AG04449 (cell line): ENCODE measurements at regions of chr3 and their contacts with region 1.

Region 1: DNA sequence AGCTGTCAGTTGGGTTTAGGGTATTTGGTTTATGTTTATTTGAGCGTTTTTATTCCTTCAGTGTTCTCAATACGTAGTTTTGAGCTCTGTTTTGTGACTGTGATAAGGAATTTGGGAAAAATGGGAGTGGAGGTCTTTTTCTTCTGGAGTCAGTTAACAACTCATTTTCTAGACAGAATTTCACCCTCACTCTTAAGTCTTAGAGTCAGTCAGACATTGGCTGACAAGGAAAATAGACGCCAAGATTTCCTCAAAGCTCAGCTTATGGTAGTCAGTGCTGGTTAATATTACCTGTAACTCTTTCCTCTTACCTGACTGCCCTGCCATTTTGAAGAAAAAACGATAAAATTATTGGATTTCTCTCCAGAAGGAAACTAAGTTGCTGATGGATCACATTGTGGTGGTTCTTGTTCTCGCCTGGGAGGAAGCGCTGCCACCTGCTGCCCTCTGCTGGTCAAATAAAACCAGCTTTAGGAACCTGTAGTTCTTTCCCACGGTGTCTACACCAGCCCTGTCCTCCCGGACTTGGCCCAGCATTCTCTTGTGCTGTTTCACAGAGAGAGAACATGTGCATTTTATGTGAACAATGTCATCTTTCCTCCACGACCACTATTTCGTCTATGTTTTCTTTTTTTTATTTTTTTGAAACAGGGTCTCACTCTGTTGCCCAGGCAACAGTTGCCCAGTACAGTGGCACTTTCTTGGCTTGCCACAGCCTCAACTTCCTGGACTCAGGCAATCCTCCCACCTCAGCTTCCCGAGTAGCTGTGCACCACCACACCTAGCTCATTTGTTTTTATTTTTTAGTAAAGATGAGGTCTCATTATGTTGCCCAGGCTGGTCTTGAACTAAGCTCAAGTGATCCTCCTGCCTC is 41.4 kb upstream of the UMPS start:
- DNase-seq: no peak
- H3K4me3 ChIP-seq: no peak overlapping the region
- CTCF ChIP-seq: peak; percentile 76

Region 2: GRCh38 chr3:124664804-124665203 is 24.0 kb before region 1 on chr3:
- CTCF ChIA-PET with region 1: interaction called, 18 read pairs
- POLR2A ChIA-PET with region 1: no interaction called
- DNase-seq: no peak
- H3K4me3 ChIP-seq: no peak overlapping the region
- CTCF ChIP-seq: no peak

Region 3: GRCh38 chr3:124671106-124671505 is 17.7 kb before region 1 on chr3:
- CTCF ChIA-PET with region 1: interaction called, 60 read pairs
- POLR2A ChIA-PET with region 1: no interaction called
- DNase-seq: no peak
- H3K4me3 ChIP-seq: no peak overlapping the region
- CTCF ChIP-seq: no peak

Region 4: DNA sequence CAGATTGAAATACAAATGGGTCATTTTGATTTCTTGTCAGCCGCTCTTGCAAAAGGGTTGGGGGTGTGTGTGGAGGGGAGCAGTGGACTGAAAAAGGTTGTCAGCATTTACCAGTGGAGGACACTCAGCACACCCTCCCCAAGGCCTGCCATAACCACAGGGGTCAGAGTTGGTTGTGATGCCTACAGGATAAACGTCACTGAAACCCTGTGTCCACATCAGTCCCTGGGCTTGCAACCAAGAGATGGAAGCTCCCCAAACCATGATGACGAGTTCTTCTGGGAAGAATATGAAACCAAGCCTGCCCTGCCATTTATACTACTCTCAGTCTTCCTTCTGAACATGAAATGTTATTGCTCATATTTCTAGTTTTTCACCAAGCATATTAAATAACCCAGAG is 12.6 kb before region 1 on chr3:
- CTCF ChIA-PET with region 1: interaction called, 60 read pairs
- POLR2A ChIA-PET with region 1: no interaction called
- DNase-seq: no peak
- H3K4me3 ChIP-seq: no peak overlapping the region
- CTCF ChIP-seq: no peak

Region 5: GRCh38 chr3:124700880-124701684 is 12.3 kb after region 1 on chr3:
- CTCF ChIA-PET with region 1: interaction called, 122 read pairs
- POLR2A ChIA-PET with region 1: interaction called, 3 read pairs
- DNase-seq: no peak
- H3K4me3 ChIP-seq: no peak overlapping the region
- CTCF ChIP-seq: no peak

Region 6: DNA sequence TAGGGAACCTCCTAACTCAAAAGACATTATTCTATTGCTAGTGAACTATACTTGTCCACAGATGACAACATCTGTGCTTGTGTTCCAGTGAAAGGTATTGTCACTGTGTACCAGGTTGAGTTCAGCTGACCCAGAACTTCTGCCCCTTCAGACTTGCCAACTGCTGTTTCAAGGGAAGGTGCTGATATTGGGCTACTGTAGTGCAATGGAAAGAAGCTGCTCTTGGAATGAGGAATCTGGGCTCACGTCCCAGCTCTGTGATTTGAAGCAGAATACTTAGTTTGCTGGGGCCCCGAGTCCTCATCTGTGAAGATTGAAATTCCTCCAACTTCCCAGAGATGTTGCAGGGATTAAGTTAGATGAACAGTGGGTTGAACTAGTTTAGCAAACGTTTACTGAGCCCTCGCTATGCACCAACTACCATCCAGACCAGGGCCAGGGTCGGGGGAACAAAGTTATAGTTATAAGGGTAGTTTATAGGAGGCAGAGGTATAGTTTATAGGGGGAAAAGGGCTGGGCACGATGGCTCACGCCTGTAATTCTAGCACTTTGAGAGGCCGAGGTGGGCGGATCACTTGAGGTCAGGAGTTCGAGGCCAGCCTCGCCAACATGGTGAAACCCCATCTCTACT is 25.5 kb after region 1 on chr3:
- CTCF ChIA-PET with region 1: interaction called, 11 read pairs
- POLR2A ChIA-PET with region 1: no interaction called
- DNase-seq: no peak
- H3K4me3 ChIP-seq: no peak overlapping the region
- CTCF ChIP-seq: no peak

Region 7: GRCh38 chr3:124730129-124730940 is 41.5 kb after region 1 on chr3 and contains the start of gene UMPS:
- CTCF ChIA-PET with region 1: interaction called, 11 read pairs
- POLR2A ChIA-PET with region 1: no interaction called
- DNase-seq: no peak
- H3K4me3 ChIP-seq: peak within 1 kb of the TSS; percentile 100
- CTCF ChIP-seq: no peak

Region 8: DNA sequence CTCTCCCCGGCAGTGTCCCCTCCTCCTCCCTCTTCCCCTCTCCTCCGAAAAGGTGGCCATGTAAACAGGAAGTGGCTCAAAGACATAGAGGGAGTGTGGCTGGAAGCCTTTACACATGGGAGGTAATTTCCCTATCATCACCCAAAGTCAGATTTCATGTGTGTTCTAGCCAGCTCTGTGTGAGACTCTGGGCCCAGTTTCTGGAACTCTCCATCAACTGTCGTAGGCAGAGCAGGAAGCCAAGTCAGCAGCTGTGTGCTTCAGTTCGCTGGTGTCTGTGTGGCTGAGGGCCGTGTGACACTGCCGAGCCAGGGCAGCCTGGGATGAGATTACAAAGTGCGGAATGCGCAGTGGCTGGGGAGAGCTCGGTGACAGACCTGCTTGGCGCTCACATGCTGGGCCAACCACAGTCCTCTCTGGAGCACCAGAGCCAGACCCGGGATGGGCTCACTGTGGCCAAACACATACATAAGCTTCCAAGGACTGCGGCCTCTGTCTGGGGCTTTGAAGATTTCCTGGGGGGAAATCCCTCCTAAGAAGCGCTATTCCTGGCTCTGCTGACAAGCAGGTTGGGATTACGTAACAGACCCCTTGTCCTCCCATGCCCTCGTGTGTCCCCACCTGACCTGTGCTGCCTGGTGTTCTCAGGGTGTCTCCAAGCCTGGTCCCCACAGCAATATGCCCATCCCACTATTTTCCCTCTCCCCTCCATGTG is 92.1 kb after region 1 on chr3:
- CTCF ChIA-PET with region 1: no interaction called
- POLR2A ChIA-PET with region 1: no interaction called
- DNase-seq: no peak
- H3K4me3 ChIP-seq: 0 out of 2 replicates have a peak overlapping the region, but pooled peaks have one; percentile 3
- CTCF ChIP-seq: no peak